ENCODE measurements at regions of chr2 and their contacts with region 1.

Region 1: DNA sequence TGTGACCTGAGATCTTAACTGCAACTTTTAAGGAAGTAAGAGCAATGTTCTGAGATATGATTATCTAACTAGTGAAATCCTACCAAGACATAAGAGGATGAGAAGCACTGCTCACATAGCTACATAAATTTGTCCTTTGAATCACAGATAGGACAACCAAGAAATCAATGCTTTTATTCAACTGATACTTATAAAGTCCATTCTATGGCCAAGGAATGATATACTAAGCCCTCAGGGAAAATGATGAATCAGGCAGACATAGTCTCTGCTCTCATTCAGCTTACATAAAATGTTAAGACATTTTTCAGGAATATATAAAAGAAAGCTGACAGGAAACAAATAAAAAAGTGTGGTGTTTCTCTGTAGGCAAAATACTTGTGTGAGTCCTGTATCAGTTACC is 39.1 kb downstream of the PGAP1 start:
- ATAC-seq: no peak
- H3K4me3 ChIP-seq: no peak overlapping the region
- H3K27ac ChIP-seq: no peak overlapping the region
- H3K4me1 ChIP-seq: no peaks in the 10 kb centered on the region

Region 2: DNA sequence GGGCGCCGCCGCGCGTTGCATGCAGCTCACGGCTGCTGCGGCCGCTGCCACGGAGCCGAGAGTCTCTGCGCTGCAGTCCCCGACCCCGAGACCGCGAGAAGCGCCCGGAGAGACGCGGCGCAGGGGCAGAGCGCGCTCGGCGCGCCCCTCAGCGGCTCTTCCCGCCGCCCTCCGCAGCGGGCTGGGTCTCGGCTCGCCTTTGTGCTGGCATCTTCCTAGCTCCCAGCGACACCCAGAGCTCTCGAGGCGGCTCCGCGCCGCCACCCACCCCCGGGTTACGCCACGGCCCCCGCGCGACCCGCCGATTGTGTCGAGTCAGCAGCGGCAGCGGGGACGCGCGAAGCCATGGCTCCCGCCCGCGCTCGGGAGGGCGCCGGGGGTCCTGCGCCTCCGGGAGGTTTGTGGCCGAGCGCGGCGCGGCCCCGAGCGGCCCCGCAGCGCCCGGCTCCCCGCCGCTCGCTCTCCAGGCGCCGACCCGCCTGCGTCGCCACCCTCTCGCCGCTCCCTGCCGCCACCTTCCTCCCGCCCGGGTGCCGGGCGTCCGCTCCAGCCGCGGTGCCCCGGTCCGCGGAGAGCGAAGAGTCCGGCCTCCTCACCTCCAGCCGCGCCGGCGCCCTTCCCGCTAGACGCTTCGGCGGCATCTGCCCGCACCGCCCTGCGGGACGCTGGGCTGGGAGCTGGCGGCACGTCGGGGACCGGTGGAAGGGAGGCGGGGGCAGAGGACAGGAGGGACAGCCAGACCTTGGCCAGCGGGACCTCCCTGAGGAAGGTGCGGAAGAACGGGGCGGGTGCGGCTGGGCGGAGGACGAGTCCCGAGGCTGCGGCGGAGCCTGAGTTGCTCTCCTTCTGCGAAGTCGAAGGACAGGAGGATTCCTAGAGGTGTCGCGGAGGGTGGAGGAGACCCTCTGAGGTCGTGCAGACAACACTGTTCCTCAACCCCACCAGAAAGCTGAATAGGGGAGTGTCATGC is 294.2 kb before region 1 on chr2:
- in situ Hi-C with region 1: no loop called
- ATAC-seq: peak; percentile 72 to 89 (median 83)
- H3K4me3 ChIP-seq: peak within 1 kb of the TSS; percentile 65 to 93 (median 74)
- H3K27ac ChIP-seq: peak within 1 kb of the TSS; percentile 89 to 93
- H3K4me1 ChIP-seq: peaks cover 18 to 22% of the 10 kb centered on the region in 2 donors

Region 3: GRCh38 chr2:197399887-197400540 is 512.6 kb after region 1 on chr2:
- in situ Hi-C with region 1: loop called in 1 of 9 experiments (anchors 25 kb)
- ATAC-seq: no peak
- H3K4me3 ChIP-seq: no peak overlapping the region
- H3K27ac ChIP-seq: no peak overlapping the region
- H3K4me1 ChIP-seq: no peaks in the 10 kb centered on the region

Measured in motor neuron (in vitro differentiated cells).